H1 (cell line): ENCODE measurements at regions of chr2 and their contacts with region 1.

Region 1: DNA sequence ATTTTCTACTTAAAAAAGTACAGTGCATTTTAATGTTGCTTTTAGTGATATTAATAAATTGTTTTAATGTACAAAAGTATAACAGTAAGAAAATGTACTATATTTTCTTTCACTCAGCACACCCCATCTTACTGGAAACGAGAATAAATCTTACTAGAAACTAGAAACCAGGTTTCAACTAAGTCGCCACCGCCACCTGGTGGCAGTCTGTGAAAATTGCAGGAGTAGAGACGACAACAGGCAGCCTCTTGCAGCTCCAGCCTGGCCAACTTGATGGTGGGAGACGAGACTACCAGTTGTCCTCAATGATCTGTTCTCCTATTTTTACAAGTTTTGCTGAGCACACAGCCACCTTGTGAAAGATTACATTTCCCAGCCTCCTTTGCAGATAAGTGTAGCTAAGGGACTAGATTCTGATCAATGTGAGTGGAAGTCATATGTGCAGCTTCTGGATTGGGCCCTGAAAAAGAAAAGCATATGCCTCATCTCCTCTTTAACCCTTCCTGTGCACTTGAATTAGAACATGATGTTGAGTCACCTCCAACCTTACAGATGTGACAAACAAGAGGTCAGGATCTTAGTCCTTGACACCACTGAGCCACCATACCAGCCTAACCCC is 8.7 kb downstream of the OTOF start:
- DNase-seq: peak; percentile 75 to 93
- H3K4me3 ChIP-seq: no peak overlapping the region
- H3K27ac ChIP-seq: no peak overlapping the region
- H3K4me1 ChIP-seq: peaks cover 0 to 3% (median 0%) of the 10 kb centered on the region in 4 experiments; a peak in 2 of 7 replicates
- H3K27me3 ChIP-seq: peaks cover 0 to 3% (median 0%) of the 10 kb centered on the region in 4 experiments; a peak in 1 of 7 replicates
- CTCF ChIP-seq: peak in 2 of 3 experiments; percentile 85 to 86; a peak in 3 of 4 replicates
- EP300 ChIP-seq: no peak
- POLR2A ChIP-seq: no peak
- RAD21 ChIP-seq: peak; percentile 90 to 94

Region 2: GRCh38 chr2:26054598-26055348 is 414.4 kb before region 1 on chr2:
- CTCF ChIA-PET with region 1: no interaction called
- POLR2A ChIA-PET with region 1: no interaction called
- DNase-seq: no peak
- H3K4me3 ChIP-seq: no peak overlapping the region
- H3K27ac ChIP-seq: no peak overlapping the region
- H3K4me1 ChIP-seq: no peaks in the 10 kb centered on the region; a peak in 1 of 7 replicates
- H3K27me3 ChIP-seq: no peaks in the 10 kb centered on the region
- CTCF ChIP-seq: no peak
- EP300 ChIP-seq: no peak
- POLR2A ChIP-seq: no peak
- RAD21 ChIP-seq: no peak

Region 3: DNA sequence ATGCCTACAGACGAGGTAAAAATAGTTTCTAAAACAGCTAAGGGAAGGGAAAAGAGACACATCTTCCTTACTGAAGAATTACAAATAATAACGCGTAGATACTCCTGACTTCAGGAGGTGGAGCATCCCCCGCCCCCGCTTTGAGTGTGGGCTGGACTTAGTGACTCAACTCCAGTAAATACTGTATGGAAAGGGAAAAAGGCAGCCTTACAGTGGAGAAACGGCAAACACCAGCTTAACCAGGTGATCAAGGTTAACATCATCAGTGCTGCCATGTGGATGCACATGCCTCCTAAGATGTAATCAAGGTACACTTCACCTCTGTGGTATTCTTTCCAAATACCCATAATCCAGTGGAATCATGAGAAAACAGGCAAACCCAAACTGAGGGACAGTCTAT is 176.5 kb before region 1 on chr2:
- CTCF ChIA-PET with region 1: no interaction called
- POLR2A ChIA-PET with region 1: no interaction called
- DNase-seq: no peak
- H3K4me3 ChIP-seq: no peak overlapping the region
- H3K27ac ChIP-seq: no peak overlapping the region
- H3K4me1 ChIP-seq: peaks cover 0 to 3% (median 1%) of the 10 kb centered on the region in 4 experiments; a peak in 4 of 7 replicates
- H3K27me3 ChIP-seq: no peaks in the 10 kb centered on the region
- CTCF ChIP-seq: no peak
- EP300 ChIP-seq: no peak
- POLR2A ChIP-seq: no peak
- RAD21 ChIP-seq: no peak

Region 4: DNA sequence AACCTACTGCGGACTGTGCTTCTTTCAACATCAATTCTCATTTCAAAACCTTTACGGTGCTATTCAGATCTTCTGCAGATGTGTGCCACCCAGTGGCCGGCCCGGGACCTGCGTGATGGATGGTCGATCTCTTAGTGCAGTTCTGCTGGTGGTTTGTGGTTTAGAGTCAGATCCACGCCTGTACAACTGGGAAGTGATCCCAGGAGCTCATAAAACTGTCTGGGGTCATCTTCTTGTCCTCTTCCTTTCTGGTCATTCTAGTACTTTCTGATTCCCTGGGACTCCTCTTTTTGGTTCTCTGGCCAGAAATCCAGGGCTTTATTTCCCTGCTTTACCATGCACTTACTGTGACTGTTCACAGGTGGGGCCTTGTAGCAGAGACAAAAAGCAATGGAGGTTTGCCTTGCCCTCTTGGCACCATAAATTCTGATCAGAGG is 139.1 kb before region 1 on chr2:
- CTCF ChIA-PET with region 1: interaction called, 11 read pairs
- POLR2A ChIA-PET with region 1: no interaction called
- DNase-seq: peak in 1 of 2 experiments; percentile 91
- H3K4me3 ChIP-seq: no peak overlapping the region
- H3K27ac ChIP-seq: no peak overlapping the region
- H3K4me1 ChIP-seq: no peaks in the 10 kb centered on the region
- H3K27me3 ChIP-seq: no peaks in the 10 kb centered on the region; a peak in 1 of 7 replicates
- CTCF ChIP-seq: peak; percentile 86 to 87 (median 86)
- EP300 ChIP-seq: no peak
- POLR2A ChIP-seq: no peak
- RAD21 ChIP-seq: peak; percentile 81 to 92

Region 5: GRCh38 chr2:26456440-26457250 is 12.6 kb before region 1 on chr2:
- CTCF ChIA-PET with region 1: interaction called, 25 read pairs
- POLR2A ChIA-PET with region 1: no interaction called
- DNase-seq: peak in 1 of 2 experiments; percentile 41
- H3K4me3 ChIP-seq: no peak overlapping the region
- H3K27ac ChIP-seq: no peak overlapping the region
- H3K4me1 ChIP-seq: peaks cover 0 to 9% (median 0%) of the 10 kb centered on the region in 4 experiments; a peak in 2 of 7 replicates
- H3K27me3 ChIP-seq: no peaks in the 10 kb centered on the region
- CTCF ChIP-seq: no peak
- EP300 ChIP-seq: no peak
- POLR2A ChIP-seq: no peak
- RAD21 ChIP-seq: no peak

Region 6: GRCh38 chr2:26495705-26496297 is 26.6 kb after region 1 on chr2:
- CTCF ChIA-PET with region 1: interaction called, 68 read pairs
- POLR2A ChIA-PET with region 1: no interaction called
- DNase-seq: no peak
- H3K4me3 ChIP-seq: no peak overlapping the region
- H3K27ac ChIP-seq: no peak overlapping the region
- H3K4me1 ChIP-seq: peaks cover 2 to 5% (median 3%) of the 10 kb centered on the region in 4 experiments; a peak in 4 of 7 replicates
- H3K27me3 ChIP-seq: no peaks in the 10 kb centered on the region
- CTCF ChIP-seq: no peak
- EP300 ChIP-seq: no peak
- POLR2A ChIP-seq: no peak
- RAD21 ChIP-seq: no peak